ENCODE measurements at regions of chr10 and their contacts with region 1.

Region 1: DNA sequence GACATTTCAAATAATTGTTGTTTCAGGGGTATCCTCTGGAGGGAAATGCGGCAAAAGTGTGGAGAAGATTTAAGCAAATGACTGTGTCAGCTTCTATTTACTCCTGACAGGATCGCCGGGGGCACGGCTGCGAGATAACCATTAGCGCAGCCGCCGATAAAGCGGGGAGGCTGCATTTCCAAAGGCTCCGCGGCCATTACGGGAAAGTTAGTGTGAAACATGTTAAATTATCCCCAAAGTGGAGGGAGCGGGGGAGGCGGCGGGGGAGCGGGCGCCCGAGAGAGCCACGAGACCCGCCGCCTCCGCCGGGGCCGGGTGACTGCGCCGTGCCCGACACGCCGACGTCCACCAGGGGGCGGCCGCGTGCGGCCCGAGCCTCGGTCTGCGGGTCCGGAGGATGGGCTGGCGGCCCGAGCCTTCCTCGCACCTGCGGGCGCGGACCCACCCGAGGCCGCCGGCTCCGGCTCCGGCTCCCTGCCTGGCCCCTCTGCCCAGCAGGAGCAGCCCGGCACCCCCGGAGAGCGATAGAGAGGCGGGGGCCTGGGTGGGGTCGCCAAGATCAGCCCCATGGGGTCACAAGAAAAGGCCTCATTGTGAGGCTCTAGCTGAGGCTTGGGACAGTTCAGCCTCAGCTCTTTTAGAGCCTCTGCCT is 74.4 kb upstream of the PAX2 start:
- DNase-seq: peak; percentile 70
- ATAC-seq: peak; percentile 73
- H3K4me3 ChIP-seq: peak overlapping the region in 1 of 5 experiments; percentile 40
- H3K4me3 Mint-ChIP-seq: peak overlapping the region; percentile 48
- H3K27ac ChIP-seq: no peak overlapping the region
- H3K27ac Mint-ChIP-seq: no peak overlapping the region
- H3K4me1 ChIP-seq: peaks cover 5 to 6% of the 10 kb centered on the region in 2 donors
- H3K4me1 Mint-ChIP-seq: peaks cover 6% of the 10 kb centered on the region
- H3K27me3 ChIP-seq: peaks cover 0 to 72% (median 41%) of the 10 kb centered on the region in 4 experiments
- H3K27me3 Mint-ChIP-seq: peaks cover 58% of the 10 kb centered on the region
- CTCF ChIP-seq: peak; percentile 96

Region 2: DNA sequence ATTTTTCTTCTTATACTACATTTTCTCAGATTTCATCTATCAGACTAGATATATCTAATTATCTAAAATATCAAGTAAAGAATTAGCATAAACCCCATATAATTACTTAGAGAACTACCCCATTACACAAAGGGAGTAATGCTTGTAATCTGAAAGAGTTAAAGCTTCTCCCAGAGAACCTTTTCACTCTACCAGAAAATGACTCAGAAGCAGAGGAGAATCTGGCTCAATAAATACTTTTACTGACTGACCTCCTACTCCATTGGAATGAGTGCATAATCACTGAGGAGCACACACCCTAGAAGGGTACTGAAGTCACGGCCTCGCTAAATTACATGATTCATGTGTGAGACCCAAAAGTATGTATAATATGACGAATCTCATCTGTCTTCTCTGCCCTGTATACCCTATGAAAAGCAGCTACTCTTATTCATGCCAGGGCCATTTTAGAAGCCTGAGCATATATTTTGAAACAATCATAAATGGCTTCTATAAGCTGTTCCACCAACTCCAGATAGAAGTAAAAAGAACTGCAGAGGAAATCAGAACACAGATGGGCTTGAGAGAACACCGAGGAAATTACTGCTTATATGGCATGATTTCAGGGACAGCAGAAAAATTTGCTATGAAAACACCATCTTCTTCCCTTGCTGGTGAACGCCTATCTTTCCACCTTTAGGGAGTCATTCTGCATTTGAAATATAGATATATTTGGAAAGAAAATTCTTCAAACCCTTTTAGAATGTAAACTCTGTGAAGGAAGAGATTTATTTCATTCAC is 693.9 kb before region 1 on chr10:
- CTCF ChIA-PET with region 1: no interaction called
- POLR2A ChIA-PET with region 1: no interaction called
- intact Hi-C with region 1: no loop called
- DNase-seq: no peak
- ATAC-seq: no peak
- H3K4me3 ChIP-seq: no peak overlapping the region
- H3K4me3 Mint-ChIP-seq: no peak overlapping the region
- H3K27ac ChIP-seq: peak overlapping the region in 1 of 2 donors; percentile 26
- H3K27ac Mint-ChIP-seq: no peak overlapping the region
- H3K4me1 ChIP-seq: peaks cover 60 to 65% of the 10 kb centered on the region in 2 donors
- H3K4me1 Mint-ChIP-seq: peaks cover 66% of the 10 kb centered on the region
- H3K27me3 ChIP-seq: no peaks in the 10 kb centered on the region
- H3K27me3 Mint-ChIP-seq: no peaks in the 10 kb centered on the region
- CTCF ChIP-seq: no peak

Region 3: GRCh38 chr10:100766693-100767421 is 95.9 kb after region 1 on chr10:
- CTCF ChIA-PET with region 1: no interaction called
- POLR2A ChIA-PET with region 1: no interaction called
- intact Hi-C with region 1: no loop called
- DNase-seq: no peak
- ATAC-seq: no peak
- H3K4me3 ChIP-seq: no peak overlapping the region
- H3K4me3 Mint-ChIP-seq: no peak overlapping the region
- H3K27ac ChIP-seq: no peak overlapping the region
- H3K27ac Mint-ChIP-seq: no peak overlapping the region
- H3K4me1 ChIP-seq: no peaks in the 10 kb centered on the region
- H3K4me1 Mint-ChIP-seq: no peaks in the 10 kb centered on the region
- H3K27me3 ChIP-seq: peaks cover 0 to 23% (median 11%) of the 10 kb centered on the region in 4 experiments
- H3K27me3 Mint-ChIP-seq: peaks cover 44% of the 10 kb centered on the region
- CTCF ChIP-seq: no peak

Region 4: GRCh38 chr10:100878291-100878910 is 207.4 kb after region 1 on chr10:
- CTCF ChIA-PET with region 1: interaction called, 7 read pairs
- POLR2A ChIA-PET with region 1: no interaction called
- intact Hi-C with region 1: loop called (anchors 1 kb)
- DNase-seq: peak; percentile 55
- ATAC-seq: peak; percentile 51
- H3K4me3 ChIP-seq: no peak overlapping the region
- H3K4me3 Mint-ChIP-seq: no peak overlapping the region
- H3K27ac ChIP-seq: no peak overlapping the region
- H3K27ac Mint-ChIP-seq: no peak overlapping the region
- H3K4me1 ChIP-seq: no peaks in the 10 kb centered on the region
- H3K4me1 Mint-ChIP-seq: no peaks in the 10 kb centered on the region
- H3K27me3 ChIP-seq: peaks cover 0 to 11% (median 3%) of the 10 kb centered on the region in 4 experiments
- H3K27me3 Mint-ChIP-seq: peaks cover 29% of the 10 kb centered on the region
- CTCF ChIP-seq: peak; percentile 45

Region 5: DNA sequence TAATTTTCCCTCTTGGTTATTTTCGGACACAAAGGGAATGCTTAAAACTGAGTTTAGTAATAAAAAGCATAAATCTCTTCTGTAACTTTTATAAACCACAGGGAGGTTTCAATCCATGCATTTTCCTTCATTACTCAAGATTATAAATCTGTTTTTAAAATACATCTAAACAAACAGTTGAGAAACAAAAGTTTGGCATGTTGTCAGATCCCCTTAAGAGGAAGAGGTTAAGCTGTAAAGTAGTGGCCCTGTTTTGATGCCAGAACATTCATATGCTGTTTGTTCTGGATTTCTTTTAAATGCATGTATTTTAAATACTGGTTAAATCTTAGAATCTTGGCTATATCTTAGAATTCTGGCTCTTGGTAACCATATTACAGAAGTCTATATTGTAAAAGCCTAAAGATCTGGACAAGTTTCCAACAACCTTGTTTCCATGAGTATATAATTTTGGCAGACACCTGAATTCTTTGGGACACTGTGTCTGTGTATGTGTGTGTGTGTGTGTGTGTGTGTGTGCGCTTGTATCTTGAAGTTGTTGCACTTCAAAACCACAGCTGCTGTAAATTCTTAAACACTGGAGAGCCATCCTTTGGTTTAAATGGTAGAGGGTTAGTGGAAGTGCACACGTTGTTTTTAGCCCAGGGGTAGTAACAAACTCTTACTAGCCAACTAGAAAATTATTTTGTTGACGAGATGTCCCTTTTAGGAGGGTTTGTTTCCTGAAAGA is 291.6 kb after region 1 on chr10:
- CTCF ChIA-PET with region 1: no interaction called
- POLR2A ChIA-PET with region 1: no interaction called
- intact Hi-C with region 1: no loop called
- DNase-seq: no peak
- ATAC-seq: no peak
- H3K4me3 ChIP-seq: no peak overlapping the region
- H3K4me3 Mint-ChIP-seq: no peak overlapping the region
- H3K27ac ChIP-seq: no peak overlapping the region
- H3K27ac Mint-ChIP-seq: no peak overlapping the region
- H3K4me1 ChIP-seq: no peaks in the 10 kb centered on the region
- H3K4me1 Mint-ChIP-seq: no peaks in the 10 kb centered on the region
- H3K27me3 ChIP-seq: no peaks in the 10 kb centered on the region
- H3K27me3 Mint-ChIP-seq: no peaks in the 10 kb centered on the region
- CTCF ChIP-seq: no peak

Region 6: DNA sequence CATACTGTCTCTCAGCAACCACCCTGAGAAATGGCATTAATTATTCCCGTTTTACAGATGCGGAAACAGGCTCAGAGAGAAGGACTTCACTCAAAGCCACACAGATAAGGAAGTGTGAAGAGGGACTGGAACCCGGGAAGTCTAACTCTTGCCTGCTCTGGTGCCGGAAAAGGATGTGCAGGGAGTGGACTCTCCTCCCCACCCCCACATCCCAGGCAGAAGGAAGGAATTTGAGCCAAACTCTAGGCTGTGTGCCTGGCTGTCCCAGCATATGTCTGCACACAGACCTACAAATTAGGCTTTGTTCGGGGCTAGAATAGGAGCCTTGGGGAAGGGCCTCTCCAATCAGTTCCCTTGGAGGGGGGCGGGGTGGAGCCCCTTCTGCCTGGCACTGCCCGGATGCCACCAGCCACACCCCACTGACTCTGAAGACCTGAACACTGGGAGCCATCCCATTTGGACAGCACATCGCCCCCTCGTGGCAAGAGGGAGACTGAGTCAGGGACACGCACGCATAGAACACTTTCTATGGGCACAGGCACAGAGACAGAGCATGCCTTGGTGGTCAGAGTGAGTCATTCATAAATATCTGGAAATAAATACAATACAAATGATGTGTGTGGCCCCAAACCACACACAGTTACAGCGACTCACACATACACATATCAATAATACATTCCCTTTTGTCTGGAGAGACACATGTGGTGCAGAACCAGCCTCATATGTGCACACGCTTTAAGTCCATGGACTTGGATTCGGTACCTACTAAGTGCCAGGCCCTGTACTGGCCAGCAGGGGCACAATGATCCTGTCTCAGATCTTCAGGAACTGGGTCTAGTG is 341.8 kb after region 1 on chr10:
- CTCF ChIA-PET with region 1: interaction called, 3 read pairs
- POLR2A ChIA-PET with region 1: no interaction called
- intact Hi-C with region 1: loop called (anchors 5 kb)
- DNase-seq: peak; percentile 77
- ATAC-seq: peak; percentile 86
- H3K4me3 ChIP-seq: no peak overlapping the region
- H3K4me3 Mint-ChIP-seq: no peak overlapping the region
- H3K27ac ChIP-seq: no peak overlapping the region
- H3K27ac Mint-ChIP-seq: no peak overlapping the region
- H3K4me1 ChIP-seq: peaks cover 8 to 14% of the 10 kb centered on the region in 2 donors
- H3K4me1 Mint-ChIP-seq: peaks cover 16% of the 10 kb centered on the region
- H3K27me3 ChIP-seq: peaks cover 0 to 32% (median 18%) of the 10 kb centered on the region in 4 experiments
- H3K27me3 Mint-ChIP-seq: peaks cover 27% of the 10 kb centered on the region
- CTCF ChIP-seq: peak; percentile 83